Dendritic cell treated with granulocyte-macrophage colony-stimulating factor and Interleukin-4, amounts not matched to agents 40 ng/mL and 50 ng/mL, for 4 days (primary cell): ENCODE measurements at regions of chr7 and their contacts with region 1.

Region 1: GRCh38 chr7:43834463-43835251 is 34.7 kb downstream of the MRPS24 start:
- H3K4me3 Mint-ChIP-seq: peak overlapping the region; percentile 26
- H3K27ac Mint-ChIP-seq: peak overlapping the region; percentile 55
- H3K4me1 Mint-ChIP-seq: peaks cover 13% of the 10 kb centered on the region
- H3K27me3 Mint-ChIP-seq: peaks cover 5% of the 10 kb centered on the region

Region 2: GRCh38 chr7:42440951-42441350 is 1393.7 kb before region 1 on chr7:
- intact Hi-C with region 1: no loop called
- H3K4me3 Mint-ChIP-seq: no peak overlapping the region
- H3K27ac Mint-ChIP-seq: no peak overlapping the region
- H3K4me1 Mint-ChIP-seq: no peaks in the 10 kb centered on the region
- H3K27me3 Mint-ChIP-seq: no peaks in the 10 kb centered on the region

Region 3: DNA sequence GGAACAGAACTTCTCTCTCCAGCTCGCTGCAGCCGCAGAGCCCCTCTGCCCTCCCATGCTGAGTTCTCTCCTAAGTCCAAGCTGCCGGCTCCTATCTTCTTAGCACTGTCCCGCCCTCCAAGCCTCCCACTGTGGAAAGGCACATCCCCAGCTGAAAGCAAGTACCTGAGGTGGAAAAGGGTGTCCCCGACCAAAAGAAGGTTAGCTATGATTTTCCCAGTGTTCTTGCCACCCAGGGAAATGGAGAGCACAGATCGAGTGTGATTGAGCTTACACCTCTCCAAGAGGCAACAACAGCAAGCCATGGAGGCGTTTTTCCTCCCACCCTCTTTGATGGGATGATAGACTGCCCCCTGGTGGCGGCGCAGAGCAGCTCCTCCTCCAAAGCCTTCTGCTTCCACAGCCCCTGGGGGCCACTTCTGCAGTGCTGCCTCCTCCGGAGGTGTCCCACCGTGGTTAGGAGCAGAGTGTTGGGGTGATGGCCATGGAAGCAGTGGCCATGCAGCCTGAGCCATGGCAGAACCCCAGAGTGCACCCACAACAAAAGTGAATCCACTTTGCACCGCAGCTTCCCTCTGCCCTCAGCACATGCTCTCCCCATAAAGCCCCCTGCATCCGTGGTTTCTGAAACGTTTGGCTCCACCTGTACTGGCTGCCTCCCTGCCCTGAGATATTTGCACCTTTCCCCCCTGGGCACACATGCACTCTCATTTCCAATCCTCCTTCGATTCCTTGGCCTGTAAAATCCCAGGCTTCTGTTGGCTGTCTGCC is 394.8 kb before region 1 on chr7:
- intact Hi-C with region 1: loop called (anchors 10 kb)
- H3K4me3 Mint-ChIP-seq: no peak overlapping the region
- H3K27ac Mint-ChIP-seq: no peak overlapping the region
- H3K4me1 Mint-ChIP-seq: no peaks in the 10 kb centered on the region
- H3K27me3 Mint-ChIP-seq: peaks cover 3% of the 10 kb centered on the region

Region 4: DNA sequence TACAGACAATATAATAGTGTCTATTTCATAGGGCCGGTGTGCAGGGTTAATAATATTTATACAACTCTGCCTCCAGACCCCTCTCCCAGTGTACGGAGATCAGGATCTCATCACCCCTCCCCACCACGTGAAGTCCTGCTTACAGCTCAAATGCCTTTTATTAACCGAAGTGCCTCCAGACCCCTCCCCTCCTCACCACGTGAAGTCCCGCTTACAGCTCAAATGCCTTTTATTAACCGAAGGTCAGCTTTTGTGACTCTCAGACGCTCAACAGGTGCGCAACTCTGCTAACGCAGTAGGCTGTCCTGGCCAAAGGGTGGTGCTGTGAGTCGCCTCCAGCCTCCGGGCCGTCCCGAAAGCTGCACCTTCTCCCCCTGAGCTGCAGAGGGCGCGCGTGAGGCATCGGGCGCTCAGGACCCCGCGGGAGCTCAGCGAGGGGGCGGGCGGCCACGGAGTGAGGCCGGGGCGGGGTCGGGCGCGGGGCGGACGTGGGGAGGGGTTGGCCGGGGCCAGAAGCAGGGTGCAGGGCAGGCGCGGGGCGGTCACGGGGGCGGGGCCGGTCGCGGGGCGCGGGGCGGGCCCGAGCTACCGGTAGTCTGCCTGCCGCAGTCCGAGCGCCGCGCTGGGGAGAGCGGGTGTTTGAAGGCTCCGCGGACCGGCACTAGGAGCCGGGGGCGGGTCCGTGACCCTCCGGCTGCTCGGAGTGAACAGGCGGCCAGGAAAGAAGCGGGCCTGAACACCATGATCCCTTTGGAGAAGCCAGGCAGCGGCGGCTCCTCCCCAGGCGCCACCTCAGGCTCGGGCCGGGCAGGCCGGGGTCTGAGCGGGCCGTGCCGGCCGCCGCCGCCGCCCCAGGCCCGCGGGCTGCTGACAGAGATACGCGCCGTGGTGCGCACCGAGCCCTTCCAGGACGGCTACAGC is 251.9 kb before region 1 on chr7 and contains the start of gene STK17A:
- intact Hi-C with region 1: loop called (anchors 1 kb)
- H3K4me3 Mint-ChIP-seq: peak within 1 kb of the TSS; percentile 94
- H3K27ac Mint-ChIP-seq: peak within 1 kb of the TSS; percentile 86
- H3K4me1 Mint-ChIP-seq: peaks cover 24% of the 10 kb centered on the region
- H3K27me3 Mint-ChIP-seq: peaks cover 21% of the 10 kb centered on the region

Region 5: DNA sequence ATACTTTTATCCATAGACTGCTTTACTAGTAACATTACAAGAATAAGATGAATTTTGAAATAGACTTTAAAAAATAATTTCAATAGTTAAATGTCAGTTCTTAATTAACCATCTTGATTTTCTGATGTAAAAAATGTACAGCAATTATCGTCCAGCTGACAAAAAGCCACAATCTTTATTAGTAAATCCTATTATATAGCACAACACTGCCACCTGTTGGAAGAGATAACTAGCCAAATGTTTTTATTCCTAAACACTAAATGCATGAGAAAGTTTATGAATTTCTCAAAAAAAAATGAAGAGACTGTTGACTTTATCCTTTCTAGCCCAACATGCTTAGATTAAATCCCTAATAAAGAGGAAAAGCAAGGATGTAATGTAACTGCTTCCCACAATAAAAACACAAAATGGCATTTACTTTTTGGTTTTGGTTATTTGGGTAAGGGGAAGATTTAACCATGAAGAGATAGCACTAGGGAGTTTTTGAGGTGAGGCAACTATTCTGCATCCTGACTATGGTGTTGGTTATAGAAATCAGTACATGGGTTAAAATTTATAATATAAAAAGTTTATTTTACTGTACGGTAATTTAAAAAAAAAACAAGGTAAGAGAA is 113.4 kb before region 1 on chr7:
- intact Hi-C with region 1: loop called (anchors 2 kb)
- H3K4me3 Mint-ChIP-seq: no peak overlapping the region
- H3K27ac Mint-ChIP-seq: no peak overlapping the region
- H3K4me1 Mint-ChIP-seq: peaks cover 43% of the 10 kb centered on the region
- H3K27me3 Mint-ChIP-seq: no peaks in the 10 kb centered on the region

Region 6: DNA sequence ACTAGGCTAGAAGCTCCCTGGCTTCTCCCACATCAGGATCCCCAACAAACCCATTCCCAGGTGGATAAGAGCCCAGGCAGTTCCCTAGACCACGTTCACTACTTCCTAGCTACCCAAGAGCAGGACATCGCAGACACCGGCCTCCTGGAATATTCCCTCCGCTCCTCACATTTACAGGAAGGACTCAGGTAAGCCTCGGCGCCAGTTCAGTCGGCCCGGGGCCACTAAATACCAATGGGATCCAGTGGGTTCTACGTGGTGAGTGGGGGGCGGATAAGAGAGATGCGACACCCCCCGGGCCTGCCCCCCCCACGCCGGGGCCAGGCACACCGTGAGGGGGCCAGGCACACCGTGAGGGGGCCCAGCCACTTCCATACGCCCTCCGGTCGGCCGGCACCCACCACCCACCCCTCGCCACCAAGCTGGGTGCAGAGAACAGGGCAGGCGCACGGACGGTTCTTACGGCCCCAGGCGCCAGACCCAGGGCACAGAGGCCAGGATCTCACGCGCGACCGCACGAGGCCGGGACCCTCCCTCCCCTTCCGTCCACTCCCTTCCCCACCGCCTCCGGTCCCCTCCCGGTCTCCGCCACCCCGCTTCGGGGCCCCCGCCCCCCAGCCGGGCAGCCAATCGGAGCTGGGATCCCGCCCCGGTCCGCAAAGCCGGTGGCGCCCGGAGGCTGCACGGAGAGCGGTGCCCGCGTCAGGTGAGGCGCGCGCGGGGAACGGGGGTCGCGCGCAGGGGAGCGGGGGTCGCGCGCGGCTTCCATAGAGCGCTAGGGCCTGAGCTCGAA is 76.4 kb before region 1 on chr7 and contains the start of gene BLVRA:
- intact Hi-C with region 1: no loop called
- H3K4me3 Mint-ChIP-seq: peak within 1 kb of the TSS; percentile 82
- H3K27ac Mint-ChIP-seq: peak within 1 kb of the TSS; percentile 92
- H3K4me1 Mint-ChIP-seq: peaks cover 70% of the 10 kb centered on the region
- H3K27me3 Mint-ChIP-seq: peaks cover 1% of the 10 kb centered on the region

Region 7: GRCh38 chr7:43856996-43857395 is 22.3 kb after region 1 on chr7:
- intact Hi-C with region 1: no loop called
- H3K4me3 Mint-ChIP-seq: no peak overlapping the region
- H3K27ac Mint-ChIP-seq: no peak overlapping the region
- H3K4me1 Mint-ChIP-seq: no peaks in the 10 kb centered on the region
- H3K27me3 Mint-ChIP-seq: peaks cover 8% of the 10 kb centered on the region